ENCODE measurements at regions of chr5 and their contacts with region 1.

Region 1: GRCh38 chr5:6576861-6577501 is 55.9 kb downstream of the NSUN2 start:
- DNase-seq: peak; percentile 40
- H3K4me3 ChIP-seq: no peak overlapping the region
- H3K27ac ChIP-seq: no peak overlapping the region
- H3K4me1 ChIP-seq: no peaks in the 10 kb centered on the region
- H3K27me3 ChIP-seq: no peaks in the 10 kb centered on the region
- CTCF ChIP-seq: peak; percentile 56 to 74

Region 2: DNA sequence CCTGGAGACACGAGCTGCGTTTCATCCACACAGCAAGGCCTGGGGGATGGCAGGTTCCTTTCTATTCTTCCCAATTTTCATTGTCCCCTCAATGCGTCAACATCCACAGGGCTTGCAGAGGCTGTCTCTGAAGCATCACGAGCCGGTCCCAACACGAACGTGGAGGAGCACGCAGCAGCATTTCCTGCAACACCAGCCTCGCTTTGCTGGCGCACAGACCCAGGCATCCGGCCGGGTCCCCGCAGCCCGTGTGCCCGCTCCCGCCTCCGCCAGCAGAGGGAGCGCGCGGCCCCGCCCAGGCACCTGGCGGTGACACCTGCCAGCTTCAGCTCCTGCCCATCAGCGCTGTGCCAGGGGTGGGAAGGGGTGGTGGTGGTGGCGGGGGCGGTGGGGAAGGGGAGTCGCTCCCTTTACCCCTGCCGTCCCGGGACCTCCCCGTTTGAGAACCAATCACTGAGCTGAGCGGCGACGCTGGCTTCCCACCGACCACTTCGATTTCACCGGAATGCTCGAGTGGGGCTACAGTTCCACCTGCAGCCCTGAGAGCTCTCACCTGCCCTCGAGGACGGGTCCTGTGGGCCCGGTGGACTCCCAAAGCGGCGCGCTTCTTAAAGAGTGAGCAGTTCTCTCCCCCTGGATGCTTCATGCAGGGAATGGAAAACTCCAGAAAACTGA is 690.0 kb before region 1 on chr5:
- CTCF ChIA-PET with region 1: no interaction called
- dilution Hi-C with region 1: no loop called
- in situ Hi-C with region 1: no loop called
- intact Hi-C with region 1: loop called (anchors 2 kb)
- DNase-seq: no peak
- H3K4me3 ChIP-seq: no peak overlapping the region
- H3K27ac ChIP-seq: no peak overlapping the region
- H3K4me1 ChIP-seq: no peaks in the 10 kb centered on the region
- H3K27me3 ChIP-seq: no peaks in the 10 kb centered on the region
- CTCF ChIP-seq: peak in 1 of 2 donors; percentile 4

Region 3: DNA sequence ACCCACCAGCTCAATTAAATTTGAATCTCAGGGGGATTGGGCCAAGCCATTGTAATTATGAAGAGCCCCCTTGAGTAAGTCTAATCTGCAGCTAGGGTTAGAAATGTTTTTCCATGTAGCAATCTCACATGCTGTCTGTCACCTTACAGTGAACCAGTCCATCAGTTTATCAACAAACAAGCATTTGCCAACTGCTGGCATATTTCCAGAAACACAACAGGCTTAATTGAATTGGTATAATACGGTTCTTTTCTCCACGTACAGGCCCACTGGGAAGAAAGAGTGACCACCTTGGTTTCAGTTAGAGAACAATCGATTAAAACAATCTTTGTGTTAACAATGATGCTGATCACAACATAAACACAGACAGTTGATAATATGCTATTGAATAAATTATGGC is 11.5 kb before region 1 on chr5:
- CTCF ChIA-PET with region 1: no interaction called
- dilution Hi-C with region 1: no loop called
- in situ Hi-C with region 1: no loop called
- intact Hi-C with region 1: no loop called
- DNase-seq: no peak
- H3K4me3 ChIP-seq: no peak overlapping the region
- H3K27ac ChIP-seq: no peak overlapping the region
- H3K4me1 ChIP-seq: no peaks in the 10 kb centered on the region
- H3K27me3 ChIP-seq: no peaks in the 10 kb centered on the region
- CTCF ChIP-seq: no peak